ENCODE measurements at regions of chr11 and their contacts with region 1.

Region 1: GRCh38 chr11:13949876-13950275 is 12.6 kb upstream of the SPON1 start:
- DNase-seq: no peak
- H3K4me3 ChIP-seq: no peak overlapping the region
- H3K27ac ChIP-seq: no peak overlapping the region
- H3K27me3 ChIP-seq: peaks cover 0 to 14% (median 0%) of the 10 kb centered on the region in 45 donors
- CTCF ChIP-seq: no peak

Region 2: GRCh38 chr11:13772223-13773046 is 177.4 kb before region 1 on chr11:
- intact Hi-C with region 1: loop called (anchors 5 kb)
- DNase-seq: peak in 1 of 10 donors; percentile 27
- H3K4me3 ChIP-seq: no peak overlapping the region
- H3K27ac ChIP-seq: no peak overlapping the region
- H3K27me3 ChIP-seq: peaks cover 0 to 3% (median 0%) of the 10 kb centered on the region in 45 donors
- CTCF ChIP-seq: peak in 55 of 56 donors; percentile 28 to 85 (median 61)

Region 3: DNA sequence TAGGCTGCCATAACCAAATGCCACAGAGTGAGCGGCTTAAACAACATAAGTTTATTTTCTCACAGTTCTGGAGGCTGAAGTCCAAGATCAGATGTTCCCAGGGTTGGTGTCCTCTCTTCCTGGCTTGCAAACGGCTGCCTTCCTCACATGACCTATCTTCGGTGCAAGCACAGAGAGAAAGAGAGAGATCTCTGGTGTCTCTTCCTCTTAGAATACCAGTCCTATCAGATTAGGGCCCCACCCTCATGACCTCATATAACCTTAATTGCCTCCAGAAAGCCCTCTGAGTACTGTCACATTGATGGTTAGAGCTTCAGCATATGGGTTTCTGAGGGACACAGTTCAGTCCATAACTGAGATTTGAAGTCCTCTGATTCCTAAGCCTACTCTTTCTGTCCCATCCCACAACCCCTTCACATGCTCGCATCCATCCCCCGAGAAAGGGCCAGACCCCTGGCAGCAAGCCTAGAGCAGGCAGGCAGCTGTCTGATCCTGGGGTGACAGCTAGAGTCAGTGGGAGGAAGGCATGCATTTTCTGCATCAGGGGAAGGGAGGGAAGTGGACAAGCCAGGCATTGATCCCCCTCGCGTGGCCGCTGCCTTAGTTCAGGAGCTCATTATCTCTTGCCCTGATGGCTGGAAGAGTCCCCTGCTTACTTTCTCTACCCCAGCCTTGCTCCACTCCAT is 167.3 kb before region 1 on chr11:
- intact Hi-C with region 1: no loop called
- DNase-seq: no peak
- H3K4me3 ChIP-seq: no peak overlapping the region
- H3K27ac ChIP-seq: no peak overlapping the region
- H3K27me3 ChIP-seq: no peaks in the 10 kb centered on the region
- CTCF ChIP-seq: no peak

Region 4: DNA sequence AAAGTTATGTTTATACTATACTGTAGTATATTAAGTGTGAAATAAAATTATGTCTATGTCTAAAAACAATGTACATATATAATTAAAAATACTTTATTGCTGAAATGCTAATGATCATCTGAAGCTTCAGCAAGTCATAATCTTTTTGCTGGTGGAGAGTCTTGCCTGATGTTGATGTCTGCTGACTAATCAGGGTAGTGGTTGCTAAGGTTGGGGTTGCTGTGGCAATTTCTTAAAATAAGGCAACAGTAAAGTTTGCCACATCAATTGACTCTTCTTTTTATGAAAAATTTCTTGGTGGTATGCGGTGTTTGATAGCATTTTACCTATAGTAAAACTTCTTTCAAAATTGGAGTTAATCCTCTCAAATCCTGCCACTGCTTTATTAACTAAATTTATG is 1186.3 kb after region 1 on chr11:
- intact Hi-C with region 1: no loop called
- DNase-seq: no peak
- H3K4me3 ChIP-seq: no peak overlapping the region
- H3K27ac ChIP-seq: no peak overlapping the region
- H3K27me3 ChIP-seq: peaks cover 0 to 7% (median 0%) of the 10 kb centered on the region in 45 donors
- CTCF ChIP-seq: no peak